Activated B cell treated with CpG ODN at 0.5 μM for 24 hours (primary cell): ENCODE measurements at regions of chr4 and their contacts with region 1.

Region 1: DNA sequence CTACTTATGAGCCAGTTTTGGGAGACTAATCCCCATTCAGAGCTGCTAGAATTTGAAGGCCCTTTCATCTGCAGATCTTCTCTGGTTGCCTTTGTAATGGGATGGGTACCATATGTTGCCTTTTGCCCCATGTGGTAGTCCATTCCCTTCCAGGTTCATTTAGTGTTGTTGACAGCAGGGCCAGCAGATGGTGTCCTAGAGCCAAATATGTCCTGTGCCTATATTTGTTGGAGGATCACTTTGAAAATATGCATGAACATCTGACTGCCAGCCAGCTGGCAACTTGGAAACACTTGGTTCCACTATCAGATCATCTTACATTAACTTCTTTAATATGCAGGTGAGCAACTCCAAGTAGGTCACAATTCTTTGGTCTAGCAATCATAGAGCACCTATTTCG is 30.4 kb downstream of the CFAP299 start:
- DNase-seq: no peak
- ATAC-seq: peak; percentile 74
- H3K4me3 Mint-ChIP-seq: no peak overlapping the region
- H3K27ac Mint-ChIP-seq: no peak overlapping the region
- H3K4me1 Mint-ChIP-seq: peaks cover 4% of the 10 kb centered on the region
- H3K27me3 Mint-ChIP-seq: peaks cover 2% of the 10 kb centered on the region
- CTCF ChIP-seq: no peak

Region 2: GRCh38 chr4:79913581-79913980 is 452.3 kb before region 1 on chr4:
- CTCF ChIA-PET with region 1: no interaction called
- POLR2A ChIA-PET with region 1: no interaction called
- intact Hi-C with region 1: no loop called
- DNase-seq: no peak
- ATAC-seq: no peak
- H3K4me3 Mint-ChIP-seq: no peak overlapping the region
- H3K27ac Mint-ChIP-seq: no peak overlapping the region
- H3K4me1 Mint-ChIP-seq: peaks cover 4% of the 10 kb centered on the region
- H3K27me3 Mint-ChIP-seq: no peaks in the 10 kb centered on the region
- CTCF ChIP-seq: no peak

Region 3: GRCh38 chr4:80619070-80619674 is 253.2 kb after region 1 on chr4:
- CTCF ChIA-PET with region 1: no interaction called
- POLR2A ChIA-PET with region 1: no interaction called
- intact Hi-C with region 1: loop called (anchors 2 kb)
- DNase-seq: no peak
- ATAC-seq: no peak
- H3K4me3 Mint-ChIP-seq: no peak overlapping the region
- H3K27ac Mint-ChIP-seq: no peak overlapping the region
- H3K4me1 Mint-ChIP-seq: no peaks in the 10 kb centered on the region
- H3K27me3 Mint-ChIP-seq: no peaks in the 10 kb centered on the region
- CTCF ChIP-seq: no peak

Region 4: DNA sequence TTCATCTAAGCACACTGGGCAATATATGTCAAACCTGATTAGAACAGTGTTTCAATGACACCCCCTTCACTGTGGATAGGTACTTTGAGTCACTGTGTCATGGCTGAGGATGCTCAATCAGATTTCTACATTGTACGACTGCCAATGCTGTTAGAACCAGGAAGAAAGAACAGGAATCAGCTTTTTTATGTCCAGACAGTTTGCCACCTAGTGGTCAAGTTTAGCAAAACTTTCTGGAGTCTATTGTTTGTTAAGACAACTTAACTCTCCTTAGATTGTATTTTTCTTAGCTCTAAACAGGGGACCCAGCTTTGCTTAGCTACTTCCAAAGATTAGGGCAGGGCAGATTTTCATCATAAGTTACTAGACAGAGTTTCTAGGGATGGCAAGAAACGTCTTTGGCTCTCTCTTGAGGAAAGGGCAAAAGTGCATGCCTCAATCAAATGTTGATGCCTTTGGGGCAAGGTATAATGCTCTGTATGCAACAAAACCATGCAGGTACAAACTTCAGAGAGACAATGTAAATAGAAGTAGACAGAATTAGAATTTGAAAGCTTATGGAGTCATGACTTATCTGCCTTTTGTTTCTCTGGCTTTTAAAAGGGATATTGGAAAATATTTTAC is 624.1 kb after region 1 on chr4:
- CTCF ChIA-PET with region 1: interaction called, 75 read pairs
- POLR2A ChIA-PET with region 1: no interaction called
- intact Hi-C with region 1: loop called (anchors 1 kb)
- DNase-seq: no peak
- ATAC-seq: peak; percentile 56
- H3K4me3 Mint-ChIP-seq: no peak overlapping the region
- H3K27ac Mint-ChIP-seq: no peak overlapping the region
- H3K4me1 Mint-ChIP-seq: peaks cover 31% of the 10 kb centered on the region
- H3K27me3 Mint-ChIP-seq: no peaks in the 10 kb centered on the region
- CTCF ChIP-seq: no peak

Region 5: GRCh38 chr4:81052119-81053068 is 686.5 kb after region 1 on chr4:
- CTCF ChIA-PET with region 1: interaction called, 39 read pairs
- POLR2A ChIA-PET with region 1: no interaction called
- intact Hi-C with region 1: loop called (anchors 1 kb)
- DNase-seq: peak; percentile 31
- ATAC-seq: peak; percentile 84
- H3K4me3 Mint-ChIP-seq: no peak overlapping the region
- H3K27ac Mint-ChIP-seq: no peak overlapping the region
- H3K4me1 Mint-ChIP-seq: peaks cover 14% of the 10 kb centered on the region
- H3K27me3 Mint-ChIP-seq: no peaks in the 10 kb centered on the region
- CTCF ChIP-seq: no peak

Region 6: GRCh38 chr4:81351654-81352445 is 985.9 kb after region 1 on chr4:
- CTCF ChIA-PET with region 1: interaction called, 15 read pairs
- POLR2A ChIA-PET with region 1: no interaction called
- intact Hi-C with region 1: loop called (anchors 1 kb)
- DNase-seq: no peak
- ATAC-seq: no peak
- H3K4me3 Mint-ChIP-seq: no peak overlapping the region
- H3K27ac Mint-ChIP-seq: no peak overlapping the region
- H3K4me1 Mint-ChIP-seq: no peaks in the 10 kb centered on the region
- H3K27me3 Mint-ChIP-seq: peaks cover 11% of the 10 kb centered on the region
- CTCF ChIP-seq: peak; percentile 79